B cell (primary cell): ENCODE measurements at regions of chr3 and their contacts with region 1.

Region 1: DNA sequence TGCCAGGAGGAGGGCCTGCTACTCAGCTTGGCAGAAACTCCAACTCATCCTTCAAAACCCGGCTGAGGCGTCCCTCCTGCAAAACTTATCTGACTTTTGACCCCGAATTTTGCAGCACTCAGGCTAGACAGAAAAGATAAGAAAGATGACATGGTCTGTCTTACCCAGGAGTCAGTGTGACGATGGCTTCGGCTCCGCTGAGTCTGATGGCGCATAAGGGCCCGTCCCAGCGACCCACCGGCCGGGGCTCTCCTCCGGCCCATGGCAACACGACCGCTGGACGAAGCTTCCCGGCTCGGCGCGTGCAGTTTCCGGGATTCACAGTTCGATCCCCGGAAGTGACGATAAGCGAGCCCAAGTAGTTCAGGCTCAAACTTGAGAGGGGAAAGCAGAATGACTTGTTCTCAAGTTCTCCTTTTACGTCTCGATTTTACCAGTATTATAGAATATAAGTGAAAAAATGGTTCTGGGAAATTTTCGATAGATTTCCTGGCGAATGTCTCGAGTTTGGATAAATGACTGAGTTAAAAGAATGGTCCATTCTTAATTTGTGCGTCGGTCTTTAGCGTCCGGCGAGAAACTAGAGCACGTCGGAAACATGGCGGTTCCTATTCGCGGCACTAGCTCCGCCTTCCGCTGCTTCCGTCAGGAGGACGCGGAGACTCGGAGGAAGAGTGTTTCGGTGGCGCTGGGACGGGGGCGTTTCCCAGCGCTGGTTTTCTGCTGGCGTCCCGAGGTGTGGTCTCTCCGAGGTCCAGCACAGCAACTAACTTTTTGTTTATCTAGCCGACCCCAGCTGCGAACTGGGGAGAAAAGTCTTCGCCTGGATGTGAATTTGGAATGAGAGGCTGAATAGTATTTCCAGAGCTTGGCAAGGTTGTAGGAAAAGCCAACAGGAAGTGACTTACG is at the start of gene LSG1:
- DNase-seq: peak; percentile 97
- ATAC-seq: peak; percentile 96
- H3K4me3 ChIP-seq: peak within 1 kb of the TSS; percentile 67 to 99 (median 85)
- H3K4me3 Mint-ChIP-seq: peak within 1 kb of the TSS; percentile 99
- H3K27ac ChIP-seq: peak within 1 kb of the TSS; percentile 92 to 96
- H3K27ac Mint-ChIP-seq: peak within 1 kb of the TSS; percentile 99
- H3K4me1 ChIP-seq: peaks cover 13 to 15% of the 10 kb centered on the region in 2 donors
- H3K4me1 Mint-ChIP-seq: peaks cover 25% of the 10 kb centered on the region
- H3K27me3 ChIP-seq: no peaks in the 10 kb centered on the region
- H3K27me3 Mint-ChIP-seq: peaks cover 7% of the 10 kb centered on the region
- CTCF ChIP-seq: no peak
- total RNA-seq, gene LSG1: 49.8 and 54.6 TPM in 2 replicates

Region 2: GRCh38 chr3:194654443-194654842 is 17.7 kb before region 1 on chr3:
- CTCF ChIA-PET with region 1: interaction called, 13 read pairs
- POLR2A ChIA-PET with region 1: no interaction called
- intact Hi-C with region 1: no loop called
- DNase-seq: no peak
- ATAC-seq: no peak
- H3K4me3 ChIP-seq: no peak overlapping the region
- H3K4me3 Mint-ChIP-seq: no peak overlapping the region
- H3K27ac ChIP-seq: no peak overlapping the region
- H3K27ac Mint-ChIP-seq: no peak overlapping the region
- H3K4me1 ChIP-seq: no peaks in the 10 kb centered on the region
- H3K4me1 Mint-ChIP-seq: no peaks in the 10 kb centered on the region
- H3K27me3 ChIP-seq: no peaks in the 10 kb centered on the region
- H3K27me3 Mint-ChIP-seq: no peaks in the 10 kb centered on the region
- CTCF ChIP-seq: no peak

Region 3: GRCh38 chr3:194976049-194976451 is 303.9 kb after region 1 on chr3:
- CTCF ChIA-PET with region 1: interaction called, 10 read pairs
- POLR2A ChIA-PET with region 1: no interaction called
- intact Hi-C with region 1: no loop called
- DNase-seq: no peak
- ATAC-seq: no peak
- H3K4me3 ChIP-seq: no peak overlapping the region
- H3K4me3 Mint-ChIP-seq: peak overlapping the region; percentile 48
- H3K27ac ChIP-seq: no peak overlapping the region
- H3K27ac Mint-ChIP-seq: peak overlapping the region; percentile 85
- H3K4me1 ChIP-seq: peaks cover 14 to 23% of the 10 kb centered on the region in 2 donors
- H3K4me1 Mint-ChIP-seq: peaks cover 26% of the 10 kb centered on the region
- H3K27me3 ChIP-seq: no peaks in the 10 kb centered on the region
- H3K27me3 Mint-ChIP-seq: no peaks in the 10 kb centered on the region
- CTCF ChIP-seq: no peak

Region 4: DNA sequence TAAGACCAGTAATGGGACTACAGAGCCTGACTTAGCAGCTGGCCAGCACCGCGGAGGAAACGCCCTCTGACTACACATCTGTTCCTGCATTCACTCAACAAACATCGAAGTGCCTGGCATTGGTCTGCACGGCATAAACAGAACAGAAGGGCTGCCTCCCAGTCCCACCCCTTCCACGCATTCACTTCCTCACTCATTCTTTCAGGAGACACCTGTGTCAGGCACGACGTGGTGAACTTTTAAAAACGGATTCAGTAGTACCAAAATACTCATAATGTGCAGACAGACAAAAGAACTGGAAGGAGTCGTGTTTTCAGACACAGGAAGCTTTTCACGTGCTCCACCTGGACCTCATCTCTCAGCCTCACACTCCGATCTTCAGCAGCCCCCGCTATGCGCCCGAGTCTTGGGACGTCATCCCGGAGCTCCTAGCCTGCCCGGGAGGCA is 475.5 kb after region 1 on chr3:
- CTCF ChIA-PET with region 1: interaction called, 4 read pairs
- POLR2A ChIA-PET with region 1: no interaction called
- intact Hi-C with region 1: loop called (anchors 5 kb)
- DNase-seq: peak; percentile 77
- ATAC-seq: peak; percentile 73
- H3K4me3 ChIP-seq: peak overlapping the region; percentile 38 to 56 (median 44)
- H3K4me3 Mint-ChIP-seq: peak overlapping the region; percentile 90
- H3K27ac ChIP-seq: peak overlapping the region; percentile 45
- H3K27ac Mint-ChIP-seq: peak overlapping the region; percentile 89
- H3K4me1 ChIP-seq: peaks cover 51 to 77% of the 10 kb centered on the region in 2 donors
- H3K4me1 Mint-ChIP-seq: peaks cover 71% of the 10 kb centered on the region
- H3K27me3 ChIP-seq: no peaks in the 10 kb centered on the region
- H3K27me3 Mint-ChIP-seq: no peaks in the 10 kb centered on the region
- CTCF ChIP-seq: no peak

Region 5: DNA sequence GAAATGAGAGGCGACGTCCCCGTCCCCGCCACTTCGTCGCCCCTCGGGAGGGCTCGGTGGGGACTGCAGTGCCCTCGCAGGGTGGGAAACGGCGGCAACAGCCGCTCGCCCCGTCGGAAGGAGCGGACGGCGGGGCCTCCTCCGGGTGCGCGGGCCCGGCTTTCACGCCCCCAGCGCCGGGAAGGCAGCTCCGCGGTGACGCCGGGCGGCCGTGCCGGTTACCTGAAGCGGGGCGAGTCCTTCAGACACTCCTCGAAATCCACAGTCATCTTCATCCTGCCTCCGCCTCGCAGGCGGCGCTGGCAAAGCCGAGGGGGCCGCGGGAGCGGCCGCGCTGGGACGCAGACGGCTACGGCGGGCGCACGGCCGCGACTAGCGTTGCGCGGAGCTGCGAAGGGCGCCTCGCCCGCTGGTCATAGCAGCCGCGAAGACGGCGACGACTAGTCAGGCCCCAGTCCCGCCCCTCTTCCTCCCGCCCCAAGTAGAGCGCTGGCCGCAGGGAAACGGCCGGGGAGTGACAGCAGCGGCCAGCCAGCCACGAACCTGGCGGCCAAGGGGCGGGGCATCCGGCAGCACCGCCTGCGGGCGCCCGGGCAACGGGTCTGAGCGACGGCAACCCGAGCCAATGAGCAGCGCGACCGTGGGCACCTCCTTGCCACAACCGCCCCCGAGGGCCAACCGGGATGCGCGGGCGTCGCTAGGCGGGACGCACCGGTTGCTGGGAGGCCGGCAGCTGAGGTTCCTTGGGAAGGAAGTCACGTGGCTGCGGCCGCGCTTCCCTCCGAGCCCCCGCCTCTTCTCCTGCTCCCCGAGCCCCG is 770.6 kb after region 1 on chr3 and contains the start of gene ACAP2:
- CTCF ChIA-PET with region 1: no interaction called
- POLR2A ChIA-PET with region 1: no interaction called
- intact Hi-C with region 1: loop called (anchors 2 kb)
- DNase-seq: peak; percentile 99
- ATAC-seq: peak; percentile 87
- H3K4me3 ChIP-seq: peak within 1 kb of the TSS; percentile 69 to 92 (median 84)
- H3K4me3 Mint-ChIP-seq: peak within 1 kb of the TSS; percentile 94
- H3K27ac ChIP-seq: peak within 1 kb of the TSS; percentile 83 to 88
- H3K27ac Mint-ChIP-seq: peak within 1 kb of the TSS; percentile 97
- H3K4me1 ChIP-seq: peaks cover 29 to 33% of the 10 kb centered on the region in 2 donors
- H3K4me1 Mint-ChIP-seq: peaks cover 40% of the 10 kb centered on the region
- H3K27me3 ChIP-seq: no peaks in the 10 kb centered on the region
- H3K27me3 Mint-ChIP-seq: no peaks in the 10 kb centered on the region
- CTCF ChIP-seq: no peak
- total RNA-seq, gene ACAP2: 108 and 113 TPM in 2 replicates